Ovary (tissue), 10 donors: ENCODE measurements at regions of chr11 and their contacts with region 1.

Region 1: GRCh38 chr11:43217849-43218417 is 93.9 kb upstream of the API5 start:
- DNase-seq: no peak
- H3K4me3 ChIP-seq: no peak overlapping the region
- H3K27ac ChIP-seq: no peak overlapping the region
- H3K4me1 ChIP-seq: no peaks in the 10 kb centered on the region
- H3K27me3 ChIP-seq: no peaks in the 10 kb centered on the region
- CTCF ChIP-seq: no peak
- EP300 ChIP-seq: no peak
- POLR2A ChIP-seq: no peak

Region 2: DNA sequence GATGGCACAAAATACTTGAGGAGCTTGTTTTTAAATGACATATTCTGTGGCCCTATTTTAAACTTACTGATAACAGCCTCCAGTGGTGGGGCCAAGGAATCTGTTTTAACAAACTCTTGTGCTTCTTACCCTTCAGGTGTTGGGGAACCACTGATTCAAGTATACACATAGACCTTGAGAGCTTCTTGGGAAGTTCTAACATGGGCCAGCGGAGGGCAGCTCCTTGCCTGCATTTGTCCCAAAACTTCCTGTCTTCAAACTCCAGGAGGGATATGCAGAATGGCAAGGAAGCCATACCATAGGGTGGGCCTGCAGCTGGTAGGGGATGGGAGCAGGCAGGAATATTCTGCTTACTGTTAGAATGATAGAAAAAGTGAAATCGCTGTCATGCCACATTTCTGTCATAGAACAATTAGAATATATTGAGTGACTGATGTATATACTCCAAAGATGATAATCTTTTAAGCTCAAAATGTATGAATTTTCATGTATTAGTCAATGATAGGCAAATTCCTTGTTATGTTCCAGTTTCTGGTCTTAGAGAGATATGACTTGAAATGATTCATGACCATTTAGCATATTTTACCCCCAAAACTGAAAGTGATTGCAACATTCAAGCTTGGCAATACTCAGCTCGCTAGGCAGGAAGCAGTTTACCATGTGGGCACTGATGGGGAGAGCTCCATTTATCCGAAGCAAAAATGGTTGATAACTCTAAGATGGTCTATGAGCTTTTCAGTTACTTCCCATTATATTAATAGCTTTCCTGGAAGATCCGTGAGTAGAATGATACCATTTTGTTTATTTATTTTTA is 886.8 kb after region 1 on chr11:
- intact Hi-C with region 1: loop called in 1 of 4 experiments (anchors 5 kb)
- DNase-seq: no peak
- H3K4me3 ChIP-seq: no peak overlapping the region
- H3K27ac ChIP-seq: no peak overlapping the region
- H3K4me1 ChIP-seq: peaks cover 1% of the 10 kb centered on the region
- H3K27me3 ChIP-seq: no peaks in the 10 kb centered on the region
- CTCF ChIP-seq: no peak
- EP300 ChIP-seq: no peak
- POLR2A ChIP-seq: no peak